K562 (cell line): ENCODE measurements at regions of chr21 and their contacts with region 1.

Region 1: DNA sequence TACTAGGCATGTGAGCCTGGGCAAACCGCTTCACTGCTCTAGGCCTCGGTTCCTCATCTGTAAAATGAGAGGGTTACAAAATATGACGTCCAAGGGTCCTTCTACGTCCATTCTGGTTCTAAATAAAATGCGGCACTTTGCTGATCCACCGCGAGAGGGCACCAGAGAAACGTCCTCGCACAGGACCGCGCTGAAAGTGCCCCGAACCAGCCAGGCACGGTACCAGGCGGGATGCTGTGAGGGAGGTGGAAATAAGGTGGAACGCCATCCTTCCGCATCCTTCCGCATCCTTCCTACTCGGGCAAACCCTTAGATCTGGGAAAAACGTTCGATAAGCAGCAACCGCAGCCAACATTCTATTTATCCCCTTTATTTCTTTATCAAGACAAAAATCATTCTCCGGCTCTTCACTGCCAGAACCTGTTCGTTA is 60.3 kb upstream of the KRTAP19-8 start:
- DNase-seq: peak; percentile 54 to 71 (median 60)
- ATAC-seq: peak; percentile 96
- H3K4me3 ChIP-seq: no peak overlapping the region
- H3K27ac ChIP-seq: no peak overlapping the region
- H3K4me1 ChIP-seq: no peaks in the 10 kb centered on the region
- H3K27me3 ChIP-seq: no peaks in the 10 kb centered on the region
- CTCF ChIP-seq: peak; percentile 82 to 92 (median 88)
- EP300 ChIP-seq: no peak
- POLR2A ChIP-seq: no peak
- RAD21 ChIP-seq: peak; percentile 58 to 82

Region 2: DNA sequence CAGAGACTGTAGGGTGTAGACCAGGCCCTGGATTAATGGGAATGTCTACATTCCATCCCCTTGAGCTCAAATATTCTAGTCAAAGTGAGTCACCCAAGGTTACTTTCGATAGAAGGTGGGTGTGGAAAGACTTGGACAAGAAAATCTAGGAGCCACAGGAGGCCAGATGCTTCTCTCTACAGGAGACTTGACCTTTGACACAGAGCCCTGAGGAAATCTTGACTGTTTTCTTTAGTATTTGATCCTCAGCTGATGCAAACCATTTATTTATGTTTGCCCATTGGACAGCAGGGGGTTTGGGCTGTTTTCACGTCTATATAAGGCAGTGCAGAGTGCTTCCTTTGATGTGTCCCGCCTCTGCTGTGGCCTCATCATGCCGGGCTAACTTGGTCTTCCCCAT is 1983.8 kb before region 1 on chr21:
- CTCF ChIA-PET with region 1: no interaction called
- POLR2A ChIA-PET with region 1: no interaction called
- in situ Hi-C with region 1: loop called (anchors 25 kb)
- intact Hi-C with region 1: no loop called
- DNase-seq: no peak
- ATAC-seq: no peak
- H3K4me3 ChIP-seq: no peak overlapping the region
- H3K27ac ChIP-seq: no peak overlapping the region
- H3K4me1 ChIP-seq: no peaks in the 10 kb centered on the region
- H3K27me3 ChIP-seq: peaks cover 5 to 10% of the 10 kb centered on the region in 2 experiments; a peak in 2 of 5 replicates
- CTCF ChIP-seq: no peak
- EP300 ChIP-seq: no peak
- POLR2A ChIP-seq: no peak
- RAD21 ChIP-seq: no peak

Region 3: GRCh38 chr21:31180256-31181081 is 81.9 kb after region 1 on chr21:
- CTCF ChIA-PET with region 1: interaction called, 4 read pairs
- POLR2A ChIA-PET with region 1: no interaction called
- in situ Hi-C with region 1: loop called (anchors 5 kb)
- intact Hi-C with region 1: loop called (anchors 1 kb)
- DNase-seq: peak; percentile 25 to 53 (median 34)
- ATAC-seq: peak; percentile 83; the same call in 2 of the 3 replicates
- H3K4me3 ChIP-seq: no peak overlapping the region
- H3K27ac ChIP-seq: no peak overlapping the region
- H3K4me1 ChIP-seq: no peaks in the 10 kb centered on the region
- H3K27me3 ChIP-seq: peaks cover 0 to 8% of the 10 kb centered on the region in 2 experiments; a peak in 1 of 5 replicates
- CTCF ChIP-seq: peak; percentile 25 to 63 (median 59); a peak in 5 of 6 replicates
- EP300 ChIP-seq: no peak
- POLR2A ChIP-seq: no peak
- RAD21 ChIP-seq: peak in 1 of 2 experiments; percentile 60; a peak in 3 of 4 replicates